ENCODE measurements at regions of chr17 and their contacts with region 1.

Region 1: DNA sequence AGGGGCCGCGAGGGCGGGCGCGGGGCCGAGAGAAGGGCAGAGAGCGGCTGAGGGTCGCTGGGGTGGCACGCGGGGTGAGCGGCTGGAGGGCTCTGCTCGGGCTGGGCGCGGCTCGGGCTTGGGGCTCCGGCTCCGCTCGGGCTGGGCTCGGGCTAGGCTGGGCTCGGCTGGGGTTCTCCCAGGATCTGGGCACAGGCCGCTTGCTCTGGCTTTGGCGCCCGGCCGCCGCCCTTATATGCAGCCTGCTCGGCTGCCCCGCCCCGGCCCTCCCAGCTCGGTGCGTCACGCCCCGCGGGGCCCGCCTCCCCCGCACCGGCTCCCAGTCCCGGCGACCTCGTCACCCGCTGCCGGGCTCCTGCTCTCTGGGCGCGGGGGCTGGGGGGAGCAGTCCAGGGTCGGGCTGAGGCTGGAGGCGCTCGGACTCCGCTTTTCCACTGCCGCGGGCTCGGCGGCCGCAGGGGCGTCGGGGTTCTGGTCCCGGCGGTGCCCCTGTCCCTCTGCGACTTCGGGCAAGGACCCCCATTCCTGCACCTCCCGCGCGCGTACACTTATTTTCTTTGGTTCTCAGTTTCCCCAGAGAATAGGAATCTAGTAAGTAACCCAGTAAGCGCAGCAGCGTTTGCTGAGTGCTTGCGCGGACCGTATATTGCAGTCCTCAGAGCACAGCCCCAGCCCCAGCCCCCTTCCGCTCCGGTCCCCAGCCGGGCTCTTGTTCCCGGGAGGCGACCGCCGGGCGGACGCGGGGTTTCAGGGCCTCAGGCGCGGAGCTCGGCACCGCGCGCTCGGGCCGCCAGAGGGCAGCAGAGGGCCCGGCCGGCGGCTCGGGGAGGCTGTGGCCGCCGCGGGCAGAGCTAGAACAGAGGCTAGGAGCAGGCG is at the start of gene RASD1:
- DNase-seq: peak; percentile 62 to 88 (median 75)
- ATAC-seq: peak; percentile 85
- H3K4me3 ChIP-seq: peak within 1 kb of the TSS; percentile 51 to 76
- H3K4me3 Mint-ChIP-seq: peak within 1 kb of the TSS; percentile 84
- H3K27ac ChIP-seq: no peak within 1 kb of the TSS
- H3K27ac Mint-ChIP-seq: no peak within 1 kb of the TSS
- H3K4me1 ChIP-seq: peaks cover 13% of the 10 kb centered on the region
- H3K4me1 Mint-ChIP-seq: peaks cover 16% of the 10 kb centered on the region
- H3K27me3 ChIP-seq: peaks cover 0 to 8% of the 10 kb centered on the region in 2 experiments
- H3K27me3 Mint-ChIP-seq: peaks cover 10% of the 10 kb centered on the region
- CTCF ChIP-seq: peak; percentile 95
- total RNA-seq, gene RASD1: 2.8 to 2.9 TPM

Region 2: GRCh38 chr17:17476865-17477467 is 19.5 kb before region 1 on chr17 and contains the start of gene MED9:
- CTCF ChIA-PET with region 1: interaction called, 4 read pairs
- POLR2A ChIA-PET with region 1: interaction called, 3 read pairs
- intact Hi-C with region 1: loop called (anchors 1 kb)
- DNase-seq: peak; percentile 87 to 97 (median 95)
- ATAC-seq: peak; percentile 100
- H3K4me3 ChIP-seq: peak within 1 kb of the TSS; percentile 88 to 96
- H3K4me3 Mint-ChIP-seq: peak within 1 kb of the TSS; percentile 89
- H3K27ac ChIP-seq: peak within 1 kb of the TSS; percentile 83 to 89
- H3K27ac Mint-ChIP-seq: peak within 1 kb of the TSS; percentile 89
- H3K4me1 ChIP-seq: peaks cover 32% of the 10 kb centered on the region
- H3K4me1 Mint-ChIP-seq: peaks cover 46% of the 10 kb centered on the region
- H3K27me3 ChIP-seq: no peaks in the 10 kb centered on the region
- H3K27me3 Mint-ChIP-seq: no peaks in the 10 kb centered on the region
- CTCF ChIP-seq: no peak
- total RNA-seq, gene MED9: 35.4 to 35.9 TPM

Region 3: DNA sequence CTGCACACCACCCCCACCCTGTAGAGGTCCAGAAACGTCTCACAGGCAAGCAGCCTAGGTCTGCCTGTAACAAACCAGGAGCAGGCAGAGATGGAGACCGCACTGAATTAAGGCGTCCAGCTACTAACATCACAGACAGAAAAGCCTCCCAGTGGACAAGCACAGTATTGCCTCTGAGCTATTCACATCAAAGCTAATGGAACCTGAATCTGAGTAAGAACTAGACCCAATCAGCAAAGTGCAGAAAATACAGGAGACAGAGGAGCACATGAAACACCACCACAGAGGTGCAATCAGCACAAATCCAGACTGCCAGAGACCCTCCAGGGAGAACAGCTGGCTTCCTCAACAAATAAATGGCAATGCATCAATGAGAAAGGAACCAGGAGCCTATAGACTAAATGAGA is 117.3 kb after region 1 on chr17:
- CTCF ChIA-PET with region 1: interaction called, 5 read pairs
- POLR2A ChIA-PET with region 1: interaction called, 3 read pairs
- intact Hi-C with region 1: loop called in 1 of 2 experiments (anchors 1 kb)
- DNase-seq: peak in 8 of 9 experiments; percentile 14 to 70 (median 48)
- ATAC-seq: peak; percentile 94
- H3K4me3 ChIP-seq: no peak overlapping the region
- H3K4me3 Mint-ChIP-seq: no peak overlapping the region
- H3K27ac ChIP-seq: no peak overlapping the region
- H3K27ac Mint-ChIP-seq: no peak overlapping the region
- H3K4me1 ChIP-seq: no peaks in the 10 kb centered on the region
- H3K4me1 Mint-ChIP-seq: no peaks in the 10 kb centered on the region
- H3K27me3 ChIP-seq: no peaks in the 10 kb centered on the region
- H3K27me3 Mint-ChIP-seq: no peaks in the 10 kb centered on the region
- CTCF ChIP-seq: peak; percentile 64

Region 4: DNA sequence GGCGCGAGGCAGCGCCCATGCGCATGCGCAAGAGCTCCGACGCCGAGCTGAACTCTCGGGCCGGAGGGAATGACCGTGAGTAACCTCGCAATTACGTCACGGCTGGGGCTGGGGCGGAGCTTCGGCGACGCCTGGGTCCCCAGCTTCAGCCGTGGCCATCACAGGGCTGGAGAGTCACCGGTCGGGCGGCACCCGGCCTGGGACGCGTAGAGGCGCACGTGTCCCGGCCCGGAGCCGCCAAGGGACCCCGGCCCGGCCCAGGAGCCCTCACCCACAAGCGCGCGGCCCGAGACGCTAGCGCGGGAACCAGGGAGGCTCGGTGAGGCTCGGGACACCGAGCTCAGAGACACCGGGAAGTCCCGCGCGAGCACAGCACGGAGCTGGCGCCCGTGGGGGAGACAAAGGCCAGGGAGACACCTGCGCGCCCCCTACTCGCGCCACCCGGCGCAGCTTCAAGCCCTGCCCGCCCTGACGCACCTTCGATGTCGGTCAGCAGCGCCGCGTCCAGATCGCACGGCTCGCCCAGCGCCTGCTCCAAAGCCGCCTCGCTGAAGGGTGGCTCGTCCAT is 339.9 kb after region 1 on chr17:
- CTCF ChIA-PET with region 1: no interaction called
- POLR2A ChIA-PET with region 1: no interaction called
- intact Hi-C with region 1: no loop called
- DNase-seq: peak; percentile 94 to 99 (median 97)
- ATAC-seq: peak; percentile 72
- H3K4me3 ChIP-seq: peak overlapping the region; percentile 87 to 95
- H3K4me3 Mint-ChIP-seq: peak overlapping the region; percentile 88
- H3K27ac ChIP-seq: peak overlapping the region; percentile 99
- H3K27ac Mint-ChIP-seq: peak overlapping the region; percentile 97
- H3K4me1 ChIP-seq: peaks cover 82% of the 10 kb centered on the region
- H3K4me1 Mint-ChIP-seq: peaks cover 75% of the 10 kb centered on the region
- H3K27me3 ChIP-seq: no peaks in the 10 kb centered on the region
- H3K27me3 Mint-ChIP-seq: no peaks in the 10 kb centered on the region
- CTCF ChIP-seq: no peak

Region 5: GRCh38 chr17:17919169-17920107 is 423.0 kb after region 1 on chr17:
- CTCF ChIA-PET with region 1: no interaction called
- POLR2A ChIA-PET with region 1: no interaction called
- intact Hi-C with region 1: loop called in 1 of 2 experiments (anchors 2 kb)
- DNase-seq: peak; percentile 34 to 79 (median 67)
- ATAC-seq: peak; percentile 97
- H3K4me3 ChIP-seq: no peak overlapping the region
- H3K4me3 Mint-ChIP-seq: no peak overlapping the region
- H3K27ac ChIP-seq: no peak overlapping the region
- H3K27ac Mint-ChIP-seq: no peak overlapping the region
- H3K4me1 ChIP-seq: peaks cover 6% of the 10 kb centered on the region
- H3K4me1 Mint-ChIP-seq: peaks cover 13% of the 10 kb centered on the region
- H3K27me3 ChIP-seq: no peaks in the 10 kb centered on the region
- H3K27me3 Mint-ChIP-seq: no peaks in the 10 kb centered on the region
- CTCF ChIP-seq: peak; percentile 73

Measured in CD8-positive, alpha-beta T cell (primary cell).